Activated CD4-positive, alpha-beta T cell treated with anti-CD3 and anti-CD28 coated beads, Interleukin-2, amount 10 ng/mL, durations not matched to agents 7 days and 5 days (primary cell): ENCODE measurements at regions of chr19 and their contacts with region 1.

Region 1: DNA sequence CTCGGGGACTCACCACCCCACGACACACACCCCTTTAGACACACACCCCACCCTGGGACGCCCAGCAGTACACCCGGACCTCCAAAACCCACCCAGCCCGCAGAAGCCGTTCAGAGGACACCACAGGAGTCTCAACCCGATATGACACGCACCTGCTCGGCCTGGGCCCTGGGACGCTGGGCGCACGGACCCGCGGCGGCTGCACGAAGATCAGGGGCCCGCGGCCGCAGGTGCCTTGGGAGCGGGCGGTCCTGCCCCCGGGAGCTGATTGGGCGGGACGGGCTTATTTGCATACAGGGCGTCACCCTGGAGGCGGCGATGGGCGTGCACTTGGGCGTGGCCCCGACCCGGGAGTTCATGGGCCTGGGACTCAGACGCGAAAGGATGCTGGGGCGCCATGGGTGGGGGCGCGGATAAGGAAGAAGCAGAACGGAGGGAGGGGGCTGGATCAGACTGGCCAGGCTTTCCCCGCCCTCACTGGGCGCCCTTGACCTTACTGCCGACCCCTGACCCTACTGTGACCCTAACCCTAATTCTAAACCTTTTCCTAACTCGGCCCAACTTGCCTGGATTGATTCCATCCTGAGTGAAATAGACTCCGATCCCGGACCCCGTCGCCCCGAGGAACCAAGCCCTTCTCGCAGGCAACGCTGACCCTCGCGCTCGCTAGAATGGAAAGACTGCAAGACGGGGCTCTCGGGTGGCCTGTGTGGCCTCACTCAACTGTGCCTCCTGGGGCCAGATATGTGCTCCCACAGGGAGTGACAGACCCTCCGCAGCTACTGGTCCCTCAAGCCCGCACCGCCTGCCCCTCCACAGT is at the start of gene MEF2B:
- DNase-seq: peak; percentile 86
- H3K4me3 Mint-ChIP-seq: no peak within 1 kb of the TSS
- H3K27ac Mint-ChIP-seq: no peak within 1 kb of the TSS
- H3K4me1 Mint-ChIP-seq: peaks cover 15% of the 10 kb centered on the region
- H3K27me3 Mint-ChIP-seq: no peaks in the 10 kb centered on the region
- total RNA-seq, gene MEF2B: 2.4 to 3.4 TPM

Region 2: DNA sequence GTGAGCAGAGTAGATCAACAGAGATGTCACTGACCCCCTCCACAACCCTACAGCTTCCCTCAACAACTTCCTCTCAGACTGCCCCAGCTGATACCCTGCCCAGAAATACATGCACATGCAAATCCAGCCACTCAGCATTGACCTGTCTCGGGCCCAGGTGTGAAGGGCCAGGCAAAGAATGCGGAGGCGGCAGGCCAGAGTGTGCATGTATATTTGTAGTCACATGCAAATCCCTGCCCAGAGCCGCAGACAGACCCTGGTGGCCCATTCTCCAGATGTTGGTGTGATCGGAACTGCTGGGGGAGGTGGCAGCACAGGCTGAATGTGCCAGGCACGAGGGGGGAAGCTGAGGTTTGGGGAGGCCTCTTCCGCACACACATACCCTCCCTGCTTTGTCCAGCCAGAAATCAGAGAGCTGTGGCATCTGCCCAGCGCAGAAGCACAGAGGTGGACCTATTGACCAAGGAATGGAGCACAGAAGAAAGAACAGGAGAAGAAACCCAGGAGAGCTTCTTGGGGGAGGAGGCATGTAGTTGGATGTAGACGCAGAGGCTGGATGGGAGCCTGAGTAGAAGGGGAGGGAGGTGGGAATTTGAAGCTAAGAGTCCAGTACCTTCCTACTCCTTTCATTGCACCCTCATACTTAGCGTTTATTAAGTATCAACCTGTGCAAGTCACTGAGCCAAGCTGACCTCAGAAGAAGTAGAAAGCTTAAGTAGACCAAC is 14.6 kb before region 1 on chr19:
- CTCF ChIA-PET with region 1: interaction called, 14 read pairs
- POLR2A ChIA-PET with region 1: no interaction called
- DNase-seq: no peak
- H3K4me3 Mint-ChIP-seq: no peak overlapping the region
- H3K27ac Mint-ChIP-seq: no peak overlapping the region
- H3K4me1 Mint-ChIP-seq: no peaks in the 10 kb centered on the region
- H3K27me3 Mint-ChIP-seq: no peaks in the 10 kb centered on the region

Region 3: DNA sequence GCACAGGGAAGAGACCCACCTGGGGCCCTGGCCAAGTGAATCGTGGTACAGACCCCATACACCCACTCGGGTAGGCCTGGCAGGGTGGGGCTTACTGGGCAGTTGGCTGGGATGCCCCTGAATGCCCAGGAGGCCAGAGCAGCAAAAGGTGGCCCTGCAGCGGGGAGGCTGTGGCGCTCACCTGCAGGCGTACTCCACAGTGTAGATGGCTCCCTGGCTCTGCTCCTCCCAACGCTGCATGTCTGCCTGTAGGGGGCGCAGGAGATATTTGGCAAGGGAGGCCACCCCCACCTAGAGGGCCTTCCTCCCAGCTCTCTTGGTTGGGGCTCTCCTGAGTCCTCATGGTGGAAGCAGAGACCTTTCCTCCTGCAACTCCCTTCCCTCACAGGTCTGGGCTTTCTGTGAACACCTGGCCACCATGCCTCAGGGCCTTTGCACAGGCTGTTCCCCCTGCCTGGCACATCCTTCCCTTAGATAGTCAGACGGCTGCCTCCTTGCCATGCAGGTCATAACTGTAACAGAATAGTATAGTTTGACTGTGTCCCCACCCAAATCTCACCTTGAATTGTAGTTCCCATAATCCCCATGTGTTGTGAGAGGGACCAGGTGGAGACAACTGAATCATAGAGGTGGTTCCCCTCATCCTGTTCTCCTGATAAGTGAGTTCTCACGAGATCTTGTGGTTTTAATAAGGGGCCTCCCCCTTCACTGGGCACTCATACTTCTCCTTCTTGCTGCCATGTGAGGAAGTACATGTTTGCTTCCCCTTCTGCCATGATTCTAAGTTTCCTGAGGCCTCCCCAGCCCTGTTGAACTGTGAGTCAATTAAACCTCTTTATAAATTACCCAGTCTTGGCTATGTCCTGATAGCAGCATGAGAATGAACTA is 15.8 kb after region 1 on chr19:
- CTCF ChIA-PET with region 1: interaction called, 12 read pairs
- POLR2A ChIA-PET with region 1: no interaction called
- DNase-seq: peak; percentile 74
- H3K4me3 Mint-ChIP-seq: no peak overlapping the region
- H3K27ac Mint-ChIP-seq: no peak overlapping the region
- H3K4me1 Mint-ChIP-seq: peaks cover 28% of the 10 kb centered on the region
- H3K27me3 Mint-ChIP-seq: no peaks in the 10 kb centered on the region